Mammary epithelial cell (primary cell): ENCODE measurements at regions of chr11 and their contacts with region 1.

Region 1: DNA sequence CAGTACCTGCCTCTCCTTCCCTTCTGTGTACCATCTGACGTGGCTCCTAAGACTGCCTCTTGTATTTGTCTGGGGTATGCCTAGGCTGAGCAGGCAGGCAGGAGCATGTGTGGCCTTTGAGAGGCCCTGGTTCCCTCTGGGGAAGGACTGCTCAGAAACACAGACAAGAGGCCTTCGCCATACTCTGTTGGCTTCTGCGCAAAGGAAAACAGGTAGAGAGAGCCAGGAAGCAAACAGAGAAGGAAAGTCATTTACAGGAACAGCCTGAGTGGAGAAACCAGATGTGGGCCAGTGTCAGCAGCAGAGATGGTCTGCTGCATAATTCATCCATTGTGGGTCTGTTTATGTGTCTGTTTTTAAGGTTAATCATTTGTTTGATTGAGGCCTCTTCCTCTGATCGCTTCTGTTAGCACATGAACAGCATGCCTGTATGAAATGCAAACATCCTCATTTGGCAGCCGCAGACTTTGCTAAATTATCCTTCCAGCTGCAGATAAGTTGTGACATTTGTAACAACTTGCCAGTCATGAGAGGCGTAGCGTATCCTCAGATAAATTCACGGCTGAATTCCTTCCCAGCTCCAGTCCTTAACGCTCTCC is 119.4 kb downstream of the GALNT18 start:
- DNase-seq: no peak
- H3K4me3 ChIP-seq: no peak overlapping the region
- H3K27ac ChIP-seq: no peak overlapping the region
- H3K4me1 ChIP-seq: no peaks in the 10 kb centered on the region
- H3K27me3 ChIP-seq: no peaks in the 10 kb centered on the region
- CTCF ChIP-seq: no peak

Region 2: GRCh38 chr11:11454731-11455140 is 47.6 kb before region 1 on chr11:
- CTCF ChIA-PET with region 1: no interaction called
- dilution Hi-C with region 1: loop called (anchors 5 kb)
- in situ Hi-C with region 1: no loop called
- intact Hi-C with region 1: no loop called
- DNase-seq: no peak
- H3K4me3 ChIP-seq: no peak overlapping the region
- H3K27ac ChIP-seq: no peak overlapping the region
- H3K4me1 ChIP-seq: peaks cover 18% of the 10 kb centered on the region
- H3K27me3 ChIP-seq: no peaks in the 10 kb centered on the region
- CTCF ChIP-seq: no peak

Region 3: GRCh38 chr11:11543656-11544055 is 41.3 kb after region 1 on chr11:
- CTCF ChIA-PET with region 1: no interaction called
- dilution Hi-C with region 1: loop called (anchors 5 kb)
- in situ Hi-C with region 1: no loop called
- intact Hi-C with region 1: no loop called
- DNase-seq: no peak
- H3K4me3 ChIP-seq: no peak overlapping the region
- H3K27ac ChIP-seq: no peak overlapping the region
- H3K4me1 ChIP-seq: no peaks in the 10 kb centered on the region
- H3K27me3 ChIP-seq: no peaks in the 10 kb centered on the region
- CTCF ChIP-seq: no peak